Right ventricle myocardium inferior (tissue), 1 donor: ENCODE measurements at regions of chr14 and their contacts with region 1.

Region 1: GRCh38 chr14:104137297-104138097 is 890 bp upstream of the KIF26A start:
- DNase-seq: peak; percentile 79
- ATAC-seq: peak; percentile 88

Region 2: GRCh38 chr14:104048758-104049507 is 88.6 kb before region 1 on chr14:
- intact Hi-C with region 1: no loop called
- DNase-seq: no peak
- ATAC-seq: peak; percentile 83

Region 3: DNA sequence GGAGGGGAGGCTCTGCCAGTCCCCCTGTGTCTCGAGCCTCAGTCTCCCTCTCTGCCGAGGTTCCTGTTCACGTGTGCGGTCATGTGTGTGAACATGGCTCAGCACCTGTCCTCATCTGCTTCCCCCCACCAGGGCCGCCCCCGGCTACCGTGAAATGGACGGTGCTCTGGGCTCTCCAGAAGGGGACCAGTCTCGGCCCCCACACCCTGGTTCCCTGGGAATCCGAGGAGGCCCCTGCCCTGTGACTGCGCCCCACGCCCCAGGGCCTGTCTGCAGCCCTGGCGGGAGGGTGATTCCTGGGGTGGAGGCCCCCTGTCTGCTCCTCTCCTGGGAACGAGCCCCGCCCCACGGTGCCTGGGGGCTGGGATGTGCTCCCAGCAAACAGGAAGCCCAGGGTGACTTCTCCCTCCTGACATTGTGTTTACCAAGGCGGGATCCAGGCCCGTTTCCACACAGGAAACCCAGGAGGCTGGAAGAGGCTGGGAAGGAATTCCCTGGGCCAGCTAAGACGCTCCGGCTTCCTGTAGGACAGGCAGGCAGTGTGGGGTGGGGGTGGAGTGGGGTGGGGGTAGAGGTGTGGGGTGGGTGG is 47.5 kb after region 1 on chr14:
- intact Hi-C with region 1: loop called (anchors 2 kb)
- DNase-seq: no peak
- ATAC-seq: peak; percentile 42

Region 4: DNA sequence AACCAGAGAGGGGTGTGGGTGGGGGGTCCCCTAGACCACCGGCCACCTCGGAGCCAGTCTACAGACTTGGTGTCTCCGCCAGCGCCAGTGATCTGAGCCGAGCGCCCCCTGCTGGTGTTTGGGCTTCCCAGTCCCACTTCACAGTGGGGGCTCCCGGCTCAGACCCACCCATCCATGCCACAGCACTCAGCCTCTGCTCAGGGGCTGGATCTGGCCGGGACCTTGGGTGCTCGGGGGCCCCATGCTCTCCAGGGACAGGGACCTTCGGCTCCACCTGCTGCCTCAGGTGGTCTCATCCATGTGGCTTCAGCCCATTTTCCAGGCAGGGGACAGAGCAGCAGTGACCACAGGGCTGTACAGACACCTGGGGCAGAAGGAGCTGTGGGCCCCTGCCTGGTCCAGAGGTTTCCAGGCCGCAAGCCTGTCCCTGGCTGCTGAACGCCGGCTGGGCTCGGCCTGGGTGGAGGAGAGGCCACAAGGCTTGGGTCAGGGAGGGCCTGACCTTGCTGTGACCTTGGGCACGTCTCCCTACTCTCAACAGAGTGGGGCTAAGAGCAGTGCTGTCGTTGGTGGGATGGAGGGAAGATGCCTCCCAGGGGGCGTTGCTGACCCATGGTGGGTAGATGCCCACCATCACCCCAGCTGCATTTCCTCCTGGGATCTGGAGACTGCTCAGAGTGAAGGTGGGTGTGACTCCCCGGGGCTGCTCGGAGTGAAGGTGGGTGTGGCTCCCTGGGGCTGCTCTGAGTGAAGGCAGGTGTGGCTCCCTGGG is 87.2 kb after region 1 on chr14:
- intact Hi-C with region 1: loop called (anchors 1 kb)
- DNase-seq: peak; percentile 73
- ATAC-seq: no peak

Region 5: DNA sequence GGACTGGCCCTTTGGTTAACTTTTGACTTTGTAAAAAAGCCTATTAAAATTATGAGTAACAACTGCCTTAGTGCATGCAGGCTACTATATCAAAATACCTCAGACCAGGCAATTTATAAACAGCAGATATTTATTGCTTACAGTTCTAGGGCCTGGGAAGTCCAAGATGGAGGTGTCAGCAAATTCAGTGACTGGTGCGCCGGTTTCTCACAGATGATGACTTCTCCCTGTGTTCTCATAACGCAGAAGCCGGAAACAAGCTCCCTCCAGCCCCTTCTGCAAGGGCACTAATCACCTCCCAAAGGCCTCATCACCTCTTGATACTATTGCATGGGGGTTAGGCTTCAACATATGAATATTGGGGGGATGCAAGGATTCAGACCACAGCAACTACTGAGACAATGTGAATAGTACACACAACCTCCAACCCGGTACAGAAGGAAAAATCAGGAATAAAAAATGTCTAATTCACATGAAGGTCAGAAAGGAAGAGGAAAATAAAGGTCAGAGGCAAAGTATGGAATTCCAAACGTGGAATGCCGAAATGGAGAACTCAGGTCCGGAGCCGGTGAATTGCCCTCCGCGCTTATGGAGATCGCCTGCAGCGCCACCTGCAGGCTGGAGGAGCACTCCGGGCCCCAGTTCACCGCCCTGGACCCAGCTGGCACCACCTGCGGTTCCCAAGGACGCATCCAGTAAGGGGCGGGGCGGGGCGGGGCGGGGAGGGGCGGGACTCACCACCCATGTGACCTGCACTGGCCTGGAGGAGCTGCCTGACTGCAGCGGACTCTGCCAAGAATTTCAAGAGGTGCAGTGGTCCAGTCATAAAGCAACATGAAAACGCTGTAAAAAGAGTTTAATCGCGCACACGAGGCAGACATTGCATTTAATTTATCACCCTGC is 204.3 kb after region 1 on chr14:
- intact Hi-C with region 1: loop called (anchors 5 kb)
- DNase-seq: no peak
- ATAC-seq: peak; percentile 42

Region 6: DNA sequence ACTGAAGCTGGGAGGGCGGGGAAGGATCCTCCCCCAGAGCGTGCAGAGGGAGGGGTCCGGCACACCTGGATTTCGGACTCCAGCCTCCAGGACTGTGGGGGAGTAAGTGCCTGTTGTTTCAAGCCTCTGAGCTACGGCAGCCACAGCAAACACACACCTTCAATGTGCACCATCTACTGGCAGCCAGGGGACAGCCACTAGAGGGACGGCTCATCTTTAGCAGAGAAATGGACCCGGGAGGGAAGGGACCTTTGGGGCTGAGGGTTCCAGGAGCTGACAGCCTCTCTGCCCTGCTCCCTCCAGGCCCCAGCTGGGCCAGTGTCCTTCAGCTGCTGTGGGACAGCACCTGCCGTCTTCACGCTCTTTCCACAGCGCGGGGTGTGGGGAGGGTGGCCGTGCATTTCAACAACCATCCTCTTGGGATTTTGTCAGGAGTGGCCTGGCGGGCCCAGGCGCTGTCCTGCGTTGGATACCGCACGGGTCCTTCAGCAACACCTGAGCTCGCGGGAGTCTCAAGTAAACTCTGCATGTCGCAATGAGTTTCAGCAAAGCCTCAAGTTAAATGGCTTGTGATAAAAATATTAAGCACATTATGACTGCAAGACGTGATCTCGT is 232.9 kb after region 1 on chr14:
- intact Hi-C with region 1: loop called (anchors 1 kb)
- DNase-seq: peak; percentile 55
- ATAC-seq: no peak

Region 7: DNA sequence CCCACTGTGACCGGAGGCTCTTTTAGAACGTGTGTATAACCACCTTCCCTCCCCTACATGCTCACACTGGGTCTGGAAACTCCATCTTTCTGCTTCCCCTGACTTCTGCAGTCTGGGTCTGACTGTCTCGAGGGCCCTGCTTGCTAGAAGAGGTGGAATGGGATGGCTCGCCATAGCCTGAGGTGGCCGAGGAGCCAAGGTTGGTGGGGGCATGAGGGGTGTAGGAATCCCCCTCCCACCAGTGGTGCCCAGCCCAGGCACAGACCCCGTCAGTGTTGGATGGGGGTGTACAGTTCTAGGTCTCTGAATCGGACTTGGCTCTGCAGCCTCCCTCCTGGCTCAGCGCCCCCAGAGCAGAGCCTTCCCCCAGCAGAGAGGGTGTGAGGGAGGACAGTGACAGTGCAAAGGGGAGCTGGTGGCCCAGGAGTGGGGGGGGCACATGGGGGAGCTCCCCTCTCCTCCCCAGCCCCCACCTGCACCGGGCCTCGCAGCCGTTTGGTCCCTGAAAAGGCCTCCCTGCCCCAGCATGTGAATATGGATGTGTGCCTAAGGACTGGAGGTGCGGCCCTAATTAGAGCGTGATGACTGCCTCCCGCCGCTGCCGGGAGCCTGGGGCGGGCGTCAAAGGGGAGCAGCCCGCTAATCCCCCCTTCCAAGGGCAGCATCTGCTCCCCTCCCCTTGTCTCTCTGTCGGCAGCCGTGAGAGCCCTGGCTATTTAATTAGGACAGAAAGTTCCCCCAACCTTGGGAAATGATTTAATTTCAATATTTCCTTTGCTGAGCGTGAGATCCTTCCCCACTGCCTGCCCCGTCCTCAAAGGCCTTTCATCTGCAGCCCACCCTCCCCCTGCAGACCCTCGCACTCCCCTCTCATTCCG is 245.9 kb after region 1 on chr14:
- intact Hi-C with region 1: no loop called
- DNase-seq: peak; percentile 47
- ATAC-seq: no peak

Region 8: DNA sequence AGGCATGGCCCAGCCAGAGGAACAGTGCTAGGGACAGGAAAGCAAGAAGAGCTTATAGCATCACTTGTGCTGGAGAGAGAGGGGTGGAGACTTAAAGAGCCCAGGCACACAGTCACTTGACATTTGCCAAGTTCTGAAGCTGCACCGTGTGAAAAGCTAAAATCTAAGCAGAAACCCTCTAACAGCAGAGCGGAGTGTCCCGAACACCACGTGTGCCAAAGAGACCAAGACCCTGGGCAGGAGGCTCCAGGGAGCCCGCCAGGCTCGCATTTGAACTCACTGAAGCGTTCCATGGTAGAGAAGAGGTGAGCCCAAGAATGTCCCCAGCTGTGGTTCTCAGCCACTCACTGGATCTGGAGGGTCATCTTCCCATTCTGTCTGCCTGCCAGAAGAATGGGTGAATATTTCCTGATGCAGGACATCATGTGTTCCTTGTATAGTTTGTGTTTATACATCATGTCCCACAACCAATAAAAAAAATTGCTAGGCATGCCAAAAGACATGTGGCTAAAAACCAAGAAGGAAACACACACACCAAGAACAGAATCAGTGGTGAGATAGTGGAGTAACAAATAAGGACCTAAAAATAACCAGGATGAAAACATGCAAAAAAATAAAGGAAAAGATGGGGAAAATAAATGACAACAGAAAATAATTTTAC is 268.2 kb after region 1 on chr14:
- intact Hi-C with region 1: no loop called
- DNase-seq: no peak
- ATAC-seq: no peak

Region 9: DNA sequence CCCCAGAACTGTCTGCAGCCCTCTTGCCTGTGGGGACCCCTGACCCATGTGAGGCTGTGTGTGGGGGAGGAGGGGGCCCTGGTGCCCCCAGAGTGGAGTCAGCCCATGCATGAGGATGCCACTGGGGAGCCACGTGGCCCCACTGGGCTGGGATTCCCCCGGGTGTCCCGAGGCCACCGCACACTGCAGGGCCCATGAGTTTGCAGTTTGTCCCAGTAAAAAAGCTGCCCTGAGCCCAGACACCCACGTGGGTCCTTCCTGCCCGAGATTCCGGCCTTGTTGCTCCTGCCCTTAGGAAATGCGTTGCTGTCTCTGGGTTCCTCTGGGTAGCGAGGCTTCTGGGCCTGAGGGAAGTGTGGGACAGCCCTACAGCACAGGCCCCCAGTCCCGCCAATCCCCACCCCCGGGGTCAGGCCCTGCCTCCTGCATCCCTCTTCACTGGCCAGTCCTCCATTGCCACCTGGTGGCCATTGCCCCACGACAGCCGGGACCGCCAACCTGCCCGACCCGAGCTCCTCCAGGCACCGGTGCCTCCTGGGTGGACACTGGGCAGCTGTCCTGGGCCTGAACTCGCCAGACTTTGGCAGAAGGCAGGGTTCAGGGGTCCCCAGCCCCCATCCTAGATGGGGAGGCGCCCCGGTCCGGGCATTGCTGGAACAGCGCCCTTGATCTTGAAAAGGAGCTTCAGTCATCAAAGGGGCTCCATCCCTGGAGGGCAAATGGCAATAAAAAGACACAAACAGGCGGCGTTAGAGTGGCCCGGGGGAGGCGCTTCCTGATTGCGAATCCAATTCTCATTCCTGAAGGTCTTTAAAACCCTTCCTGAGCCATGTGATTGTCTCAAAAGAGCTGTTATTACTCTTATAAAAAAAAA is 426.5 kb after region 1 on chr14:
- intact Hi-C with region 1: loop called (anchors 1 kb)
- DNase-seq: peak; percentile 13
- ATAC-seq: peak; percentile 72

Region 10: DNA sequence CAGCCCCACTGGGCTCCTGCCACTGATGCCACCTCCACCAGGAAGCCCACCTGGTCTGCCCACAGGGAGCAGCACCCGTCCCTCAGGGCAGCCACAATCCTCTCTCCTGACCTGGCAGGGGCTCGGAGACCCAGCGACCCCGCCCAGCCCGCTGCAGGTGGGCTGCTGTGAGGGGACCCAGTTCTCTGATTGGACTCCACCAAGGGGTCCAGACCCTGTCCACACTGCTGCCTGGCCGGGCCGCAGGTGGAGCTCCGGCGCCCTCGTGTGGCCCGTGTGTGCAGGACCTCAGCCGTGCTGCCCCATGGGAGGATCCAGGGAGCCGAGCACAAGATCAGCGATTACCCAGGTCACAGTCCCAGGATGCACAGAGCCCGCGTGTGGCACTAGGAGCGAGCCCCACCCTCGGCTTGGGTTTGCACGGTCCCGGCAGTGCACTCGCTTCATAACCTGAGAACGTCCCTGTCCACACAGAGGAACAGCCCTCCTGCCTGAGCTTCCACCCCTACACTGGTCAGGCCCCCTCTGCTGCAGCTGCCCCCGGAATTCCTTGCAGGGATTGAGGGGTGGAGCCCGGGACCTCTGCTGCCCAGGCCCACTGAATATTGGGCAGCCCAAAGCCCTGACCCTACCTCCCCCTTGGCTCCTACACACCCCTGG is 502.5 kb after region 1 on chr14:
- intact Hi-C with region 1: loop called (anchors 5 kb)
- DNase-seq: no peak
- ATAC-seq: peak; percentile 83